Activated CD8-positive, alpha-beta memory T cell treated with anti-CD3 and anti-CD28 coated beads, Interleukin-2, amount 10 ng/mL, durations not matched to agents 7 days and 5 days (primary cell): ENCODE measurements at regions of chr6 and their contacts with region 1.

Region 1: GRCh38 chr6:25490018-25490801 is 161.8 kb upstream of the SCGN start:
- DNase-seq: peak; percentile 79
- ATAC-seq: peak; percentile 79
- H3K4me3 Mint-ChIP-seq: no peak overlapping the region
- H3K27ac Mint-ChIP-seq: no peak overlapping the region
- H3K4me1 Mint-ChIP-seq: peaks cover 4% of the 10 kb centered on the region
- H3K27me3 Mint-ChIP-seq: no peaks in the 10 kb centered on the region

Region 2: DNA sequence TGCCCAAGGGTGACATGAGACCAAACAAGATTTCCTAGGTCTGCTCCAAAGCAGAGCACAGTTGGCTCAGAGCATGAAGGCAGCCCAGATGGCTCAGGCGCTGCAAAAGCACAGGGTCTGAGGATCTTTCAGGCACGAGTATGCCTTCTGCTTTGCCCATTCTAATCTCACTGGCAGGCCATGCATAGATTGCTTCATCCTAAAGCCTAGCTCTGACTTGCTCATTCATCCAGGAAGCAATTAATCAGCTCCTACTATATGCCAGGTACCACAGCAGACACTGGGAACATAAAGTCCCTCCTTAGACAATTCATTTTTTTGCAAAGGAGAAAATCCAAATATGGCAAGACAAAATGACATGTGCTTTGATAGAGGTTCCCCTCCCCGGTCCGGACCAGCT is 1032.1 kb before region 1 on chr6:
- CTCF ChIA-PET with region 1: no interaction called
- DNase-seq: no peak
- ATAC-seq: no peak
- H3K4me3 Mint-ChIP-seq: no peak overlapping the region
- H3K27ac Mint-ChIP-seq: no peak overlapping the region
- H3K4me1 Mint-ChIP-seq: no peaks in the 10 kb centered on the region
- H3K27me3 Mint-ChIP-seq: peaks cover under 1% of the 10 kb centered on the region

Region 3: GRCh38 chr6:25413207-25413905 is 76.9 kb before region 1 on chr6:
- CTCF ChIA-PET with region 1: no interaction called
- DNase-seq: no peak
- ATAC-seq: no peak
- H3K4me3 Mint-ChIP-seq: no peak overlapping the region
- H3K27ac Mint-ChIP-seq: peak overlapping the region; percentile 38
- H3K4me1 Mint-ChIP-seq: peaks cover 19% of the 10 kb centered on the region
- H3K27me3 Mint-ChIP-seq: no peaks in the 10 kb centered on the region

Region 4: DNA sequence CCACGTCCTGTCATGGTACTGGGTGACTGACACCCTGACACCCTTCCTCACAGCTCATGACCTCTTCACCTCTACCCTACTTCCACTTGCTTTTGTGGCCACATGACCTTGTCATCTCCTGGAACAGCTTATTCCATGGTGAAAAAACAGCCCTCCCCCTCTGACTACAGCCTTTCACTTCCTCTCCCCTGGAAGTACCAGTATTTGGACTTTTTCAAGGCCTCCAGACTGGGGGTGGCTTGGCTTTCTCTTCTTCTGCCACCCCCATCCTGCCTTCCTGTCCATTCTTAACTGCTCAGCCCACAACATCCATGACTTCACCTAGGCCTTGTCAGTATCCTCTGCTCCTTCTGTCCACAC is 42.7 kb before region 1 on chr6:
- CTCF ChIA-PET with region 1: no interaction called
- DNase-seq: no peak
- ATAC-seq: no peak
- H3K4me3 Mint-ChIP-seq: no peak overlapping the region
- H3K27ac Mint-ChIP-seq: no peak overlapping the region
- H3K4me1 Mint-ChIP-seq: peaks cover 9% of the 10 kb centered on the region
- H3K27me3 Mint-ChIP-seq: no peaks in the 10 kb centered on the region

Region 5: DNA sequence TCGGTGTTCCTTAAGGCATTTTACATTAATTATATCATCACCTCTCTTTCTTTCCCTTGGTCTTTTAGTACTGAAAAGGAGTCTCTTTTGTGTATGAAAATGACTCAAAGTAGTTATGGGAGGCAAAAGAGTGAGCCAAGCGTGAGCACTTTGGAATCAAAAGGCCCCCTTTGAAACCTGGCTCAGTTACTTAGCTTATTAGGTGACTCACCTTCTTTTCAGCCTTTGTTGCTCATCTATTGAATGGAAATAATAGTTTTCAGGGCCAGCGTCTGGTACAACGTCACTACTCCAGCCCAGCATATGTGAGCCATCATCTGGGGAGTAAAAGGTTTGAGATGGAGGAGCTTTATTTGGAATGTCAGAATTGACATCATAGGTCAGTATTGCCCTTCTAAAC is 14.5 kb after region 1 on chr6:
- CTCF ChIA-PET with region 1: interaction called, 15 read pairs
- DNase-seq: no peak
- ATAC-seq: no peak
- H3K4me3 Mint-ChIP-seq: no peak overlapping the region
- H3K27ac Mint-ChIP-seq: no peak overlapping the region
- H3K4me1 Mint-ChIP-seq: no peaks in the 10 kb centered on the region
- H3K27me3 Mint-ChIP-seq: no peaks in the 10 kb centered on the region